ENCODE measurements at regions of chr10 and their contacts with region 1.

Region 1: DNA sequence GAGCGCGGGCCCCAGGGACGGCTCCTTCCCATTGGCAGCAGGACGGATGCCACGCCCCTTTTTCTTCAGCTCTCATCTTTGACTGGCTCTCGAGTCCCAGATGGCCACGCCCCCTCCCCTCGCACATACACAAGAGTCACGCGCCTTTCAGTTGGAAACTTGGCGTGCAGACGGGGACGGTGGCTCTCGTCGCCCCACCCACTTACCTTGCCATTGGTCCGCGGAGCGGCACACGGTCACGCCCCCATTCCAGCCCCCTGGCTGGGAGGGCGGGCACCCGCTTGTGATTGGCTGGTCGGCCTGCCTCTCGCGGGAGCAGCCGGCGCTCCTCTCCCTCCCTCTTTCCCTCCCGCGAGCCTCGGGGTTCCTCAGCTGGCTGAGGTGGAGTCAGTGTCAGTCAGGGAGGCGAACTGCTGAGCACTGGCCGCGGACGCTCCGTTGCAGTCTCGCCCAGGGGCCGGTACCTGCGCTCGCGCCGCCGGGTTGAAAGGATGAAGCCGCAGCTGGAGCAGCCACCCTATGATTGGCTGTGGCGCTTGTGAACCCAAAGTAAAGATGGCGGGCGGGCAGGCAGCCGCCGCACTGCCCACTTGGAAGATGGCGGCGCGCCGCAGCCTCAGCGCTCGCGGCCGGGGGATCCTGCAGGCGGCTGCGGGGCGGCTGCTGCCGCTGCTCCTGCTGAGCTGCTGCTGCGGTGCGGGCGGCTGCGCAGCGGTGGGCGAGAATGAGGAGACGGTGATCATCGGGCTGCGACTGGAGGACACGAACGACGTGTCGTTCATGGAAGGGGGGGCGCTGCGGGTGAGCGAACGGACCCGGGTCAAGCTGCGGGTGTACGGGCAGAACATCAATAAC is at the start of gene CNNM2:
- DNase-seq: peak; percentile 100
- ATAC-seq: peak; percentile 91
- total RNA-seq, gene CNNM2: 34.5 to 38.6 TPM

Region 2: GRCh38 chr10:102583435-102584417 is 334.5 kb before region 1 on chr10:
- intact Hi-C with region 1: no loop called
- DNase-seq: peak; percentile 78 to 90
- ATAC-seq: peak; percentile 97

Region 3: GRCh38 chr10:103069453-103070331 is 151.5 kb after region 1 on chr10:
- intact Hi-C with region 1: loop called (anchors 10 kb)
- DNase-seq: peak; percentile 44 to 83
- ATAC-seq: peak; percentile 85

Region 4: GRCh38 chr10:103244663-103245271 is 326.6 kb after region 1 on chr10:
- intact Hi-C with region 1: loop called (anchors 5 kb)
- DNase-seq: peak; percentile 68 to 75
- ATAC-seq: peak; percentile 20

Region 5: GRCh38 chr10:104139221-104139620 is 1221.0 kb after region 1 on chr10:
- intact Hi-C with region 1: no loop called
- DNase-seq: no peak
- ATAC-seq: no peak